H1 (cell line): ENCODE measurements at regions of chr5 and their contacts with region 1.

Region 1: GRCh38 chr5:41722359-41722950 is 147.8 kb downstream of the OXCT1 start:
- DNase-seq: no peak
- H3K4me3 ChIP-seq: no peak overlapping the region
- H3K27ac ChIP-seq: no peak overlapping the region
- H3K4me1 ChIP-seq: no peaks in the 10 kb centered on the region
- H3K27me3 ChIP-seq: no peaks in the 10 kb centered on the region
- CTCF ChIP-seq: no peak
- EP300 ChIP-seq: no peak
- POLR2A ChIP-seq: no peak
- RAD21 ChIP-seq: peak in 1 of 2 experiments; percentile 11; a peak in 1 of 4 replicates

Region 2: GRCh38 chr5:41598011-41598410 is 124.4 kb before region 1 on chr5:
- CTCF ChIA-PET with region 1: no interaction called
- POLR2A ChIA-PET with region 1: no interaction called
- DNase-seq: no peak
- H3K4me3 ChIP-seq: no peak overlapping the region; a peak in 1 of 8 replicates
- H3K27ac ChIP-seq: no peak overlapping the region
- H3K4me1 ChIP-seq: no peaks in the 10 kb centered on the region
- H3K27me3 ChIP-seq: no peaks in the 10 kb centered on the region
- CTCF ChIP-seq: no peak
- EP300 ChIP-seq: no peak
- POLR2A ChIP-seq: no peak
- RAD21 ChIP-seq: no peak

Region 3: DNA sequence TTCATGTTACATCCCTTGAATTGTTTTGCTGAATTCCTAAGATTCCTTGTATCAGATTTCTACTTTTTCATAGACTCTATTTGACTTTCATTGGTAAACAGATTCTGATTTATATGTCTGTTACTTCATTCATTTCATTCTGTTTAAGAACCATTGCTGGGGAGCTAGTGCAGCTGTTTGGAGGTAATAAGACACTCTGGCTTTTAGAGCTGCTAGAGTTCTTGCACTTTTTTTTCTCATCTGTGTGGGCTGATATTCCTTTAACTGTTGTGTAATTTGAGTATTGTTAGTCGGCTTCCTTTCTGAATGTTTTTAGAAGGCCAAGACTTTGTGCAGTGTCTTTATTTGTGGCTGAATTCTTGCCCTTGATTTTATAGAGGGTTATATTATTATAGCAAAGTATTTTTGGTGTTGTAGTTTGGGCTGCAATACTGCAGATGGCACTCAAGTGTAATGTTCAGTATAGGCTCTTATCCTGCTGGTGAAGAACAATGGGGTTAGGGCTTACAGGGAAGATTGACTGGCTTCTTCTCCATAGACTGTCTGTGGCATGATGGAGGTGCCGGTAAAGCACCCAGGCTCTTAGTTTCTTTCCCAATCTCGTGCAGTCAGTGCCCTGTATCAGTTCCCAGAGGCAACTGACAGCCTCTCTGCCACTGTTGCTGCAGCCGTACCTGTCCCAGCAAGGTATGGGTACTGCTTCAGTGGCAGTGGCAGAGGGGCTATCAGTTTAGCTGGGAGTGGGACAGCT is 14.4 kb before region 1 on chr5:
- CTCF ChIA-PET with region 1: interaction called, 11 read pairs
- POLR2A ChIA-PET with region 1: no interaction called
- DNase-seq: peak in 1 of 2 experiments; percentile 59
- H3K4me3 ChIP-seq: no peak overlapping the region
- H3K27ac ChIP-seq: no peak overlapping the region
- H3K4me1 ChIP-seq: peaks cover 0 to 4% (median 0%) of the 10 kb centered on the region in 4 experiments; a peak in 2 of 7 replicates
- H3K27me3 ChIP-seq: no peaks in the 10 kb centered on the region
- CTCF ChIP-seq: peak in 2 of 3 experiments; percentile 49 to 59; a peak in 2 of 4 replicates
- EP300 ChIP-seq: no peak
- POLR2A ChIP-seq: no peak
- RAD21 ChIP-seq: peak; percentile 79 to 80

Region 4: DNA sequence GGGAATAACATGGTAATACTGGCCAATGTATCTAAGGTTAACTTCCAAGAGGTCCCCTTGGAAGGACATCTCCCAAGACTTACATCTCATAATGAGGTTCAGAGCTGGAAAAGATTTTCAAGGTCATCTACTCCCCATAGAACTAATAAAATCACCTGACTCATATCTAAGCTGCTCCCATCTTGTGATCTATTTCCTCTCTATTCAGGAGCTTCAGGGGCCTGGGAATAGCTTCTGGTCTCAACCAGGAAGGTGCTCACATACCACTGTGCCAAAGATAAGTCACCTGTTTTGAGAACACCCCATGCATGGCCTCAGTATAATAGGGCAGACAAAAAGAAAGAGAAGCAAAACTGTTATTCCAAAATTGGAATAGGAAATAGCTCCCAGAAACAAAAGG is 73.6 kb after region 1 on chr5:
- CTCF ChIA-PET with region 1: no interaction called
- POLR2A ChIA-PET with region 1: no interaction called
- DNase-seq: no peak
- H3K4me3 ChIP-seq: no peak overlapping the region
- H3K27ac ChIP-seq: no peak overlapping the region
- H3K4me1 ChIP-seq: peaks cover 0 to 3% (median 0%) of the 10 kb centered on the region in 4 experiments; a peak in 1 of 7 replicates
- H3K27me3 ChIP-seq: no peaks in the 10 kb centered on the region
- CTCF ChIP-seq: no peak
- EP300 ChIP-seq: no peak
- POLR2A ChIP-seq: no peak
- RAD21 ChIP-seq: no peak